ENCODE measurements at regions of chr2 and their contacts with region 1.

Region 1: GRCh38 chr2:96145036-96145847 is at the start of gene DUSP2:
- DNase-seq: peak; percentile 71 to 96 (median 85)
- ATAC-seq: peak; percentile 33
- H3K4me3 ChIP-seq: peak within 1 kb of the TSS; percentile 93
- H3K4me3 Mint-ChIP-seq: peak within 1 kb of the TSS; percentile 98
- H3K27ac ChIP-seq: peak within 1 kb of the TSS; percentile 97 to 99
- H3K27ac Mint-ChIP-seq: peak within 1 kb of the TSS; percentile 98
- H3K4me1 ChIP-seq: peaks cover 73% of the 10 kb centered on the region
- H3K4me1 Mint-ChIP-seq: peaks cover 79% of the 10 kb centered on the region
- H3K27me3 ChIP-seq: no peaks in the 10 kb centered on the region
- H3K27me3 Mint-ChIP-seq: no peaks in the 10 kb centered on the region
- CTCF ChIP-seq: no peak
- total RNA-seq, gene DUSP2: 728 to 730 TPM

Region 2: DNA sequence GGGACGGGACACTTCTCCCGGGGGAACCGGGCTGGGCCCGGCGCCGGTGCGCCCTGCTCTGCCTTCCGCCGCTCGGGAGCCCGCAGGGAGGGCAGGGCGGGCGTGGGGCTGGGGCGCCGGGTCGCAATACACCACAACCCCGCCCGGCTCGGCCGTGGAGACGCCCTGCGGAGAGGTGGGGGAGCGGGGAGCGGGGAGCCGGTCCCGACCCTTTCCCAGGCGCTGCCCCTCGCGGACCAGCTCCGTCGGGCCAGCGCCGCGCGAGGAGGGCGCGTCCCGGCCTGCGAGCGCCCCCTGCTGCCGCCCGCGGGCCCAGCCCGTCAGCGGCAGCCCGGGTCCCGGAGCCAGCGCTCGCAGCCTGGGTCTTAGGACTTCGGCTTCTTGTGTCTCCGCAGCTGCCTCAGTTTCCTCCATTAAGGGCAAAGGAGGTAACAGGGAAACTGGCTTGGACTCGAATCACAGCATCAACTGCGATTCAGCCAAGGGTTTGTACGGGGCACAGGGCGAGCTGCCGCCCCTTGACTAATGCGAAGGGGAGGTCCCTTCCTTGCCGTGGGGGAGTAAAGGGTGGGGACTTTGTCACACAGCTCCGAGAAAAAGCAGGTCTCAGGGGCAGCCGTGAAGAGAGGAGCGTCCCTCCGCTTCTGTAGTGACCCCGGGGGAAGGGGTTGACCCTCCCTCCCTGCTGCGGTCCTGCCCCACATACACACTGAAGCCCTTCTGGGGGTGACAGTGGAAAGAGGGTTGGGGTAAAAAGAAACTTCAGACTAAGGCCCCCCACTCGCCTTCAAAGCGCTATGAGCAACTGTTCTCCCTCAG is 28.2 kb before region 1 on chr2:
- CTCF ChIA-PET with region 1: interaction called, 11 read pairs
- POLR2A ChIA-PET with region 1: no interaction called
- intact Hi-C with region 1: no loop called
- DNase-seq: peak in 13 of 14 experiments; percentile 37 to 86 (median 55)
- ATAC-seq: peak; percentile 75
- H3K4me3 ChIP-seq: peak overlapping the region; percentile 21
- H3K4me3 Mint-ChIP-seq: peak overlapping the region; percentile 77
- H3K27ac ChIP-seq: no peak overlapping the region
- H3K27ac Mint-ChIP-seq: no peak overlapping the region
- H3K4me1 ChIP-seq: peaks cover 18% of the 10 kb centered on the region
- H3K4me1 Mint-ChIP-seq: peaks cover 10% of the 10 kb centered on the region
- H3K27me3 ChIP-seq: peaks cover 15 to 22% of the 10 kb centered on the region in 2 experiments
- H3K27me3 Mint-ChIP-seq: peaks cover 31% of the 10 kb centered on the region
- CTCF ChIP-seq: peak; percentile 61

Region 3: GRCh38 chr2:96157651-96158553 is 12.7 kb after region 1 on chr2:
- CTCF ChIA-PET with region 1: interaction called, 4 read pairs
- POLR2A ChIA-PET with region 1: interaction called, 66 read pairs
- intact Hi-C with region 1: loop called in 1 of 2 experiments (anchors 2 kb)
- DNase-seq: peak; percentile 36 to 89 (median 74)
- ATAC-seq: peak; percentile 92
- H3K4me3 ChIP-seq: peak overlapping the region; percentile 12
- H3K4me3 Mint-ChIP-seq: peak overlapping the region; percentile 60
- H3K27ac ChIP-seq: peak overlapping the region in 1 of 2 donors; percentile 34
- H3K27ac Mint-ChIP-seq: peak overlapping the region; percentile 72
- H3K4me1 ChIP-seq: peaks cover 73% of the 10 kb centered on the region
- H3K4me1 Mint-ChIP-seq: peaks cover 79% of the 10 kb centered on the region
- H3K27me3 ChIP-seq: no peaks in the 10 kb centered on the region
- H3K27me3 Mint-ChIP-seq: no peaks in the 10 kb centered on the region
- CTCF ChIP-seq: no peak

Region 4: GRCh38 chr2:96164459-96165184 is 19.4 kb after region 1 on chr2:
- CTCF ChIA-PET with region 1: interaction called, 4 read pairs
- POLR2A ChIA-PET with region 1: interaction called, 66 read pairs
- intact Hi-C with region 1: loop called (anchors 1 to 2 kb)
- DNase-seq: peak in 7 of 14 experiments; percentile 44 to 88 (median 64)
- ATAC-seq: peak; percentile 88
- H3K4me3 ChIP-seq: peak overlapping the region; percentile 27
- H3K4me3 Mint-ChIP-seq: peak overlapping the region; percentile 65
- H3K27ac ChIP-seq: peak overlapping the region; percentile 68 to 77
- H3K27ac Mint-ChIP-seq: peak overlapping the region; percentile 90
- H3K4me1 ChIP-seq: peaks cover 49% of the 10 kb centered on the region
- H3K4me1 Mint-ChIP-seq: peaks cover 46% of the 10 kb centered on the region
- H3K27me3 ChIP-seq: no peaks in the 10 kb centered on the region
- H3K27me3 Mint-ChIP-seq: no peaks in the 10 kb centered on the region
- CTCF ChIP-seq: no peak

Region 5: GRCh38 chr2:96174251-96175144 is 29.3 kb after region 1 on chr2:
- CTCF ChIA-PET with region 1: interaction called, 229 read pairs
- POLR2A ChIA-PET with region 1: interaction called, 199 read pairs
- intact Hi-C with region 1: no loop called
- DNase-seq: peak; percentile 76 to 90 (median 82)
- ATAC-seq: peak; percentile 100
- H3K4me3 ChIP-seq: no peak overlapping the region
- H3K4me3 Mint-ChIP-seq: no peak overlapping the region
- H3K27ac ChIP-seq: no peak overlapping the region
- H3K27ac Mint-ChIP-seq: no peak overlapping the region
- H3K4me1 ChIP-seq: peaks cover 6% of the 10 kb centered on the region
- H3K4me1 Mint-ChIP-seq: peaks cover 11% of the 10 kb centered on the region
- H3K27me3 ChIP-seq: no peaks in the 10 kb centered on the region
- H3K27me3 Mint-ChIP-seq: no peaks in the 10 kb centered on the region
- CTCF ChIP-seq: peak; percentile 92

Region 6: GRCh38 chr2:96208143-96209010 is 63.1 kb after region 1 on chr2 and contains the start of gene STARD7:
- CTCF ChIA-PET with region 1: no interaction called
- POLR2A ChIA-PET with region 1: interaction called, 20 read pairs
- intact Hi-C with region 1: loop called (anchors 2 to 5 kb)
- DNase-seq: peak; percentile 94 to 98 (median 96)
- ATAC-seq: peak; percentile 87
- H3K4me3 ChIP-seq: peak within 1 kb of the TSS; percentile 85
- H3K4me3 Mint-ChIP-seq: peak within 1 kb of the TSS; percentile 96
- H3K27ac ChIP-seq: peak within 1 kb of the TSS; percentile 57 to 87
- H3K27ac Mint-ChIP-seq: peak within 1 kb of the TSS; percentile 89
- H3K4me1 ChIP-seq: peaks cover 49% of the 10 kb centered on the region
- H3K4me1 Mint-ChIP-seq: peaks cover 57% of the 10 kb centered on the region
- H3K27me3 ChIP-seq: no peaks in the 10 kb centered on the region
- H3K27me3 Mint-ChIP-seq: no peaks in the 10 kb centered on the region
- CTCF ChIP-seq: peak; percentile 17
- total RNA-seq, gene STARD7: 57.4 to 58.6 TPM

Region 7: GRCh38 chr2:96265840-96266679 is 120.8 kb after region 1 on chr2 and contains the starts of genes CIAO1 and TMEM127:
- CTCF ChIA-PET with region 1: interaction called, 4 read pairs
- POLR2A ChIA-PET with region 1: no interaction called
- intact Hi-C with region 1: loop called (anchors 2 to 5 kb)
- DNase-seq: peak; percentile 95 to 99 (median 97)
- ATAC-seq: peak; percentile 92
- H3K4me3 ChIP-seq: peak within 1 kb of the TSS; percentile 86
- H3K4me3 Mint-ChIP-seq: peak within 1 kb of the TSS; percentile 92
- H3K27ac ChIP-seq: peak within 1 kb of the TSS; percentile 85 to 87
- H3K27ac Mint-ChIP-seq: peak within 1 kb of the TSS; percentile 82
- H3K4me1 ChIP-seq: peaks cover 51% of the 10 kb centered on the region
- H3K4me1 Mint-ChIP-seq: peaks cover 43% of the 10 kb centered on the region
- H3K27me3 ChIP-seq: no peaks in the 10 kb centered on the region
- H3K27me3 Mint-ChIP-seq: no peaks in the 10 kb centered on the region
- CTCF ChIP-seq: no peak
- total RNA-seq, gene CIAO1: 55.4 to 55.6 TPM
- total RNA-seq, gene TMEM127: 34.2 to 36.0 TPM